CD4-positive, alpha-beta memory T cell (primary cell): ENCODE measurements at regions of chr19 and their contacts with region 1.

Region 1: GRCh38 chr19:7348587-7349230 is at the start of gene ARHGEF18:
- DNase-seq: peak; percentile 62 to 75 (median 71)
- H3K4me3 ChIP-seq: peak within 1 kb of the TSS; percentile 96 to 100
- H3K4me3 Mint-ChIP-seq: peak within 1 kb of the TSS; percentile 93 to 100 (median 98)
- H3K27ac ChIP-seq: peak within 1 kb of the TSS; percentile 74
- H3K27ac Mint-ChIP-seq: peak within 1 kb of the TSS; percentile 89 to 99 (median 95)
- H3K4me1 ChIP-seq: peaks cover 77% of the 10 kb centered on the region
- H3K4me1 Mint-ChIP-seq: peaks cover 39 to 81% (median 58%) of the 10 kb centered on the region in 4 donors
- H3K27me3 ChIP-seq: no peaks in the 10 kb centered on the region
- H3K27me3 Mint-ChIP-seq: no peaks in the 10 kb centered on the region
- total RNA-seq, gene ARHGEF18: 82.3 to 83.8 TPM

Region 2: GRCh38 chr19:7098701-7099596 is 249.8 kb before region 1 on chr19:
- CTCF ChIA-PET with region 1: interaction called, 3 read pairs
- POLR2A ChIA-PET with region 1: interaction called, 11 read pairs
- intact Hi-C with region 1: no loop called
- DNase-seq: peak; percentile 82 to 92 (median 87)
- H3K4me3 ChIP-seq: peak overlapping the region; percentile 57 to 86
- H3K4me3 Mint-ChIP-seq: peak overlapping the region; percentile 84 to 96 (median 92)
- H3K27ac ChIP-seq: peak overlapping the region; percentile 86
- H3K27ac Mint-ChIP-seq: peak overlapping the region; percentile 74 to 98 (median 94)
- H3K4me1 ChIP-seq: peaks cover 23% of the 10 kb centered on the region
- H3K4me1 Mint-ChIP-seq: peaks cover 13 to 40% (median 27%) of the 10 kb centered on the region in 4 donors
- H3K27me3 ChIP-seq: no peaks in the 10 kb centered on the region
- H3K27me3 Mint-ChIP-seq: peaks cover 0 to 3% of the 10 kb centered on the region in 2 donors

Region 3: GRCh38 chr19:7297742-7298141 is 51.0 kb before region 1 on chr19:
- CTCF ChIA-PET with region 1: no interaction called
- POLR2A ChIA-PET with region 1: no interaction called
- intact Hi-C with region 1: no loop called
- DNase-seq: no peak
- H3K4me3 ChIP-seq: no peak overlapping the region
- H3K4me3 Mint-ChIP-seq: no peak overlapping the region
- H3K27ac ChIP-seq: no peak overlapping the region
- H3K27ac Mint-ChIP-seq: no peak overlapping the region
- H3K4me1 ChIP-seq: peaks cover 10% of the 10 kb centered on the region
- H3K4me1 Mint-ChIP-seq: peaks cover 2 to 11% (median 7%) of the 10 kb centered on the region in 4 donors
- H3K27me3 ChIP-seq: no peaks in the 10 kb centered on the region
- H3K27me3 Mint-ChIP-seq: peaks cover 18 to 21% of the 10 kb centered on the region in 2 donors

Region 4: DNA sequence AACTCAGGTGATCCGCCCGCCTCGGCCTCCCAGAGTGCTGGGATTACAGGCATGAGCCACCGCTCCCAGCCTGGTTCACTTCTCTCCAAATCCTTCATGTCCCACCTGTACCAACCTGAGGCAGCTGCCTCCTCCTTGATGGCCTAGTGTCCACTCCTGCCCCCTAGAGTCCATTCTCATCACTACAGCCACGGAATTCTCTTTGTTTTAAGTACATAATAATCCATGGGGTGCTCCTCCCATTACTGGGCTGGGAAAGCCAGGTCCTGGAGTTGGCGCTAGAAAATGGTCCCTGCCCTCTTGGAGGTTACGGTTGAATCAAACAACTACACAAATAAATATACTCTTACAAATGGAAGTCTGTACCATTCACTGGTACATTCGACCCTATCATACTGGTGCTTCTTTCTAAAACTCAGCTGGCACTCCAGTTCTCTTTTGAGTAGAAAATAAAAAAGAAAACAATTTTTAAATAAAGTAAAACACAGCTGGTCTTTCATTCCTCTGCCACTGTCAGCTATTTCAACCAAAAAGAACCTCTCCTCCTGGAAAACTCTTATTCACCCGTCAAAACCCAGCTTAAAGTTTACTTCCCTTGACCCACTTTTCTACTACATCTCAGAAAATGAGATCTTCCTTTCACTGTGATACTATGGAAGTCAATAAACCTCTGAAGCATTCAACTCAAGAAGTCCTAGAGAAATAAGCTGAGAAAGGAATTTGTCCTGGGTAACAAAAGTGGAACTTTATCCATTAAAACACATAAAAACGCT is 22.4 kb before region 1 on chr19:
- CTCF ChIA-PET with region 1: interaction called, 22 read pairs
- POLR2A ChIA-PET with region 1: interaction called, 10 read pairs
- intact Hi-C with region 1: no loop called
- DNase-seq: peak in 2 of 5 donors; percentile 24 to 37
- H3K4me3 ChIP-seq: no peak overlapping the region
- H3K4me3 Mint-ChIP-seq: no peak overlapping the region
- H3K27ac ChIP-seq: no peak overlapping the region
- H3K27ac Mint-ChIP-seq: no peak overlapping the region
- H3K4me1 ChIP-seq: no peaks in the 10 kb centered on the region
- H3K4me1 Mint-ChIP-seq: no peaks in the 10 kb centered on the region
- H3K27me3 ChIP-seq: no peaks in the 10 kb centered on the region
- H3K27me3 Mint-ChIP-seq: peaks cover 1 to 2% of the 10 kb centered on the region in 2 donors

Region 5: GRCh38 chr19:7366701-7367420 is 18.2 kb after region 1 on chr19:
- CTCF ChIA-PET with region 1: interaction called, 50 read pairs
- POLR2A ChIA-PET with region 1: interaction called, 50 read pairs
- intact Hi-C with region 1: no loop called
- DNase-seq: peak in 2 of 5 donors; percentile 31 to 32
- H3K4me3 ChIP-seq: no peak overlapping the region
- H3K4me3 Mint-ChIP-seq: peak overlapping the region in 1 of 8 donors; percentile 63
- H3K27ac ChIP-seq: no peak overlapping the region
- H3K27ac Mint-ChIP-seq: peak overlapping the region in 6 of 7 donors; percentile 22 to 88 (median 68)
- H3K4me1 ChIP-seq: peaks cover 16% of the 10 kb centered on the region
- H3K4me1 Mint-ChIP-seq: peaks cover 18 to 48% (median 32%) of the 10 kb centered on the region in 4 donors
- H3K27me3 ChIP-seq: no peaks in the 10 kb centered on the region
- H3K27me3 Mint-ChIP-seq: no peaks in the 10 kb centered on the region

Region 6: GRCh38 chr19:7394731-7395359 is 46.1 kb after region 1 on chr19:
- CTCF ChIA-PET with region 1: interaction called, 24 read pairs
- POLR2A ChIA-PET with region 1: interaction called, 15 read pairs
- intact Hi-C with region 1: loop called (anchors 5 kb)
- DNase-seq: peak; percentile 88 to 95 (median 90)
- H3K4me3 ChIP-seq: peak overlapping the region in 1 of 2 donors; percentile 57
- H3K4me3 Mint-ChIP-seq: peak overlapping the region; percentile 84 to 92 (median 87)
- H3K27ac ChIP-seq: peak overlapping the region; percentile 58
- H3K27ac Mint-ChIP-seq: peak overlapping the region; percentile 78 to 96 (median 93)
- H3K4me1 ChIP-seq: peaks cover 46% of the 10 kb centered on the region
- H3K4me1 Mint-ChIP-seq: peaks cover 26 to 56% (median 34%) of the 10 kb centered on the region in 4 donors
- H3K27me3 ChIP-seq: no peaks in the 10 kb centered on the region
- H3K27me3 Mint-ChIP-seq: no peaks in the 10 kb centered on the region